ENCODE measurements at regions of chr6 and their contacts with region 1.

Region 1: GRCh38 chr6:26017632-26017966 is 55.0 kb downstream of the TRIM38 start:
- DNase-seq: peak in 1 of 2 donors; percentile 91
- H3K4me3 ChIP-seq: peak overlapping the region; percentile 41 to 43
- H3K27ac ChIP-seq: peak overlapping the region; percentile 71
- H3K4me1 ChIP-seq: peaks cover 17% of the 10 kb centered on the region
- H3K27me3 ChIP-seq: no peaks in the 10 kb centered on the region
- CTCF ChIP-seq: no peak
- POLR2A ChIP-seq: peak in 1 of 2 donors; percentile 62

Region 2: GRCh38 chr6:25404693-25405169 is 612.9 kb before region 1 on chr6:
- intact Hi-C with region 1: loop called (anchors 5 kb)
- DNase-seq: no peak
- H3K4me3 ChIP-seq: peak overlapping the region in 1 of 2 donors; percentile 9
- H3K27ac ChIP-seq: no peak overlapping the region
- H3K4me1 ChIP-seq: peaks cover 11% of the 10 kb centered on the region
- H3K27me3 ChIP-seq: no peaks in the 10 kb centered on the region
- CTCF ChIP-seq: no peak
- POLR2A ChIP-seq: no peak